ENCODE measurements at regions of chr7 and their contacts with region 1.

Region 1: DNA sequence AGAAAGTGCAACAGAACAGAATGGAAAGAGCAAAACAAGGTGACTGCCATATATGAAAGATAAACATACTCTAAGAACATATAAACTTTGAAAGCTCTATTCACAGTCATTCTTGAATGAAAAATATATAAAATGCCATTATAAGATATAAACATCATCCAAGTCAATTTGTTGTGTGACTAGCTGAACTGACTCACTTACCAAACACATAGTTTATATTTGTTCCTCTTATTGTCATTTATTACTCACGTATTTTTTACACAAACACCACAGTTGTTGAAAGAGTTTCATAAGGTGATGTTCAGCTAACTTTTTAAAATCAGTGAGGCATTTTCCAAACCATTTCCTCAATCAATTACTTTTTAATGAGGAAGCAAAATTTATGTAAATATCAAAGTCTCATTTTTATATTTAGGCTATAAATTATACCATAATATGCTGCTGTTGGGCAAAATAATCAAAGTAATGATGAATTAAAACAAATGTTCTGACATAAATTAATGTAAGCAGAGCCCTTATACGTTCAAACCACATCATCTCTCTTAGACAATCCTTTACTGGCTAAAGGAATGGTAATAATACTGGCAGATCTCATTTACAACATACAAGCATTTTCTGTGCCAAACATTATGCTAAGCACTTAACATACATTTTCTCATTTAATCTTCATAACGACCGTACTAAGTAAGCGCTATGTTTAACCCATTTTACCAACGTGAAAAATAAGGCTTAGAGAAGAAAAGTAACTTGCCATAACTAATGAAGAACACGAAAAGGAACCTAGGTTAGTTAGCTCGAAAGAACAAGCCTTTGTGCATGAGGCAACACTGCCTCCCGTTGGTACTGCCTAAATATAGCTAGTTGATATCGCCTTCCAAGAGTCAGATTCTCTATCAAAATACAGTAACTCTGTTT is 7.3 kb downstream of the LRRN3 start:
- DNase-seq: peak in 1 of 6 donors; percentile 8
- ATAC-seq: peak in 3 of 4 donors; percentile 56 to 65 (median 64)
- H3K4me3 ChIP-seq: no peak overlapping the region
- H3K27ac ChIP-seq: no peak overlapping the region
- H3K4me1 ChIP-seq: peaks cover 0 to 9% (median 6%) of the 10 kb centered on the region in 3 donors
- H3K27me3 ChIP-seq: no peaks in the 10 kb centered on the region
- CTCF ChIP-seq: peak in 2 of 4 donors; percentile 13 to 17

Region 2: DNA sequence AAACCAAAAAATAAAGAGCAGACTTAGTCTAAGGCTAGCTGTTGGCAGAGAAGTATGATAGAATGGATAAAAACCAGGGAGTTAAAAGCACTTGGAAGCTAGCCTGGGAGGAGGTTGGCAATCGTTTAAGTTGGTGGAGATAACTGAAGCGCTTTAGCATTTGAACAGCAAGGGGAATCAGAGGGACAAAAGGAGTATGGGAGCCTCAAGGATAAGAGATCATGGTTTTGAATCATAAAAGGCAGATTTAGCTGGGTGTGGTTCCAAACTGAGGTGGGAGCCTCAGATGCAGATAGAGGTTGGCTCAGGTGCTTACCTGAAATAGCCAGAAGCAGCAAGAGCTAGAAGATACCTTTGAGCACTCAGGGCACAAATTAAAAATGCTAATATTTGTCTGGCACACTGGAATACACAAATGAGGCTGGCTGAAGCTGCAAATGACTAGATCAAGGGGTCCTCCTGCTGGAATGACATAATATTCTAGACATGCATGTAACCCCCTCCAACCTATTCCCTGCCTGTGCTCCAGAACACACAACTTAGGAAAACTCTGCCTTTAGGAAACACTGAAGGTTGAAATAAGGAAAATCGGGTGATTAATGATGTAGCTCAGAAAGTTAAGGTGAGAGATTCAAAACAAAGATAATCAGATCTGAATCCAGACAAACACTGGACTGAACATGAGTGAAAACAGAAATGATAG is 379.6 kb before region 1 on chr7:
- intact Hi-C with region 1: no loop called
- DNase-seq: no peak
- ATAC-seq: no peak
- H3K4me3 ChIP-seq: no peak overlapping the region
- H3K27ac ChIP-seq: no peak overlapping the region
- H3K4me1 ChIP-seq: no peaks in the 10 kb centered on the region
- H3K27me3 ChIP-seq: no peaks in the 10 kb centered on the region
- CTCF ChIP-seq: no peak

Region 3: DNA sequence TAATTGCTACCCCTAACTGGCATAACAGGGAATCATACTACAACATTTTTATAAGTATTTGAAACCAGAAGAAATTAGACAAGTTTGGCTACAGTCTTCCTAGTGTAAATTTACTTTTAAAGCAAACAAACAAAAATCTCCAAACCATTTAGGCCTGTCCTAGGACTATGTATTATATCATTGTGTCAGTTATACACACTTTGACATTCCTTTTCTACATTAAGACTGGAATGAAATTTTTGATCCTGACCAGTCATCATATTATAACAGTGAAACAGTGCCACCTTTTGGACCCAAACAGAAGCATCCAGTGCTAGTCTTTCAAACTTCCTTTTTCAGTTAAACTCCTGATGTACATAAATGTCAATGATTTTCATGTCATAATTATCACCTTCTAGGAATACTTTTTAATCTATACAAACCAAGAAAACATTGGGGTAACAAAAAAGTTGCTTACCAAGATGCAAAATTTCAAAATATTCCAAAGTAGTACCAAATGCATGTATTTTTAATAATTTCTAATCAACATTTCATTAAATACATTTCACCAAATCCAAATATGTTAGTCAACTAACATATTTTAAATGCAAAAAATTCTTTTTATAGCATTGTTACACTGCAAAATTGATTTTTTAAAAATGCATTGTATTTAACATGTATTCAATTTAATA is 388.3 kb after region 1 on chr7:
- intact Hi-C with region 1: loop called in 1 of 3 experiments (anchors 10 kb)
- DNase-seq: no peak
- ATAC-seq: peak; percentile 53 to 89 (median 85)
- H3K4me3 ChIP-seq: no peak overlapping the region
- H3K27ac ChIP-seq: no peak overlapping the region
- H3K4me1 ChIP-seq: no peaks in the 10 kb centered on the region
- H3K27me3 ChIP-seq: no peaks in the 10 kb centered on the region
- CTCF ChIP-seq: peak in 3 of 4 donors; percentile 27 to 58 (median 50)